H1 (cell line): ENCODE measurements at regions of chr11 and their contacts with region 1.

Region 1: DNA sequence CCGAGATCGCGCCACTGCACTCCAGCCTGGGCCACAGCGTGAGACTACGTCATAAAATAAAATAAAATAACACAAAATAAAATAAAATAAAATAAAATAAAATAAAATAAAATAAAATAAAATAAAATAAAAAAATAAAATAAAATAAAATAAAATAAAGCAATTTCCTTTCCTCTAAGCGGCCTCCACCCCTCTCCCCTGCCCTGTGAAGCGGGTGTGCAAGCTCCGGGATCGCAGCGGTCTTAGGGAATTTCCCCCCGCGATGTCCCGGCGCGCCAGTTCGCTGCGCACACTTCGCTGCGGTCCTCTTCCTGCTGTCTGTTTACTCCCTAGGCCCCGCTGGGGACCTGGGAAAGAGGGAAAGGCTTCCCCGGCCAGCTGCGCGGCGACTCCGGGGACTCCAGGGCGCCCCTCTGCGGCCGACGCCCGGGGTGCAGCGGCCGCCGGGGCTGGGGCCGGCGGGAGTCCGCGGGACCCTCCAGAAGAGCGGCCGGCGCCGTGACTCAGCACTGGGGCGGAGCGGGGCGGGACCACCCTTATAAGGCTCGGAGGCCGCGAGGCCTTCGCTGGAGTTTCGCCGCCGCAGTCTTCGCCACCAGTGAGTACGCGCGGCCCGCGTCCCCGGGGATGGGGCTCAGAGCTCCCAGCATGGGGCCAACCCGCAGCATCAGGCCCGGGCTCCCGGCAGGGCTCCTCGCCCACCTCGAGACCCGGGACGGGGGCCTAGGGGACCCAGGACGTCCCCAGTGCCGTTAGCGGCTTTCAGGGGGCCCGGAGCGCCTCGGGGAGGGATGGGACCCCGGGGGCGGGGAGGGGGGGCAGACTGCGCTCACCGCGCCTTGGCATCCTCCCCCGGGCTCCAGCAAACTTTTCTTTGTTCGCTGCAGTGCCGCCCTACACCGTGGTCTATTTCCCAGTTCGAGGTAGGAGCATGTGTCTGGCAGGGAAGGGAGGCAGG is at the start of gene GSTP1:
- DNase-seq: peak; percentile 82 to 92
- H3K4me3 ChIP-seq: peak within 1 kb of the TSS; percentile 51 to 87 (median 77)
- H3K27ac ChIP-seq: peak within 1 kb of the TSS; percentile 75
- H3K4me1 ChIP-seq: peaks cover 5 to 33% (median 17%) of the 10 kb centered on the region in 4 experiments
- H3K27me3 ChIP-seq: 0 out of 7 replicates have a peak, but pooled peaks cover 0 to 2% (median 0%) of the 10 kb centered on the region in 4 experiments
- CTCF ChIP-seq: peak; percentile 52 to 87 (median 64)
- EP300 ChIP-seq: peak in 1 of 2 experiments; percentile 81; a peak in 1 of 3 replicates
- POLR2A ChIP-seq: peak; percentile 97 to 98
- RAD21 ChIP-seq: peak; percentile 30 to 64; a peak in 3 of 4 replicates
- total RNA-seq, gene GSTP1: 1,454 and 1,516 TPM in 2 replicates

Region 2: GRCh38 chr11:67545280-67545679 is 38.2 kb before region 1 on chr11:
- CTCF ChIA-PET with region 1: interaction called, 3 read pairs
- POLR2A ChIA-PET with region 1: interaction called, 15 read pairs
- DNase-seq: no peak
- H3K4me3 ChIP-seq: no peak overlapping the region
- H3K27ac ChIP-seq: no peak overlapping the region
- H3K4me1 ChIP-seq: peaks cover 0 to 5% (median 0%) of the 10 kb centered on the region in 4 experiments; a peak in 2 of 7 replicates
- H3K27me3 ChIP-seq: no peaks in the 10 kb centered on the region; a peak in 1 of 7 replicates
- CTCF ChIP-seq: peak in 2 of 3 experiments; percentile 29 to 44; a peak in 2 of 4 replicates
- EP300 ChIP-seq: no peak
- POLR2A ChIP-seq: no peak
- RAD21 ChIP-seq: no peak

Region 3: DNA sequence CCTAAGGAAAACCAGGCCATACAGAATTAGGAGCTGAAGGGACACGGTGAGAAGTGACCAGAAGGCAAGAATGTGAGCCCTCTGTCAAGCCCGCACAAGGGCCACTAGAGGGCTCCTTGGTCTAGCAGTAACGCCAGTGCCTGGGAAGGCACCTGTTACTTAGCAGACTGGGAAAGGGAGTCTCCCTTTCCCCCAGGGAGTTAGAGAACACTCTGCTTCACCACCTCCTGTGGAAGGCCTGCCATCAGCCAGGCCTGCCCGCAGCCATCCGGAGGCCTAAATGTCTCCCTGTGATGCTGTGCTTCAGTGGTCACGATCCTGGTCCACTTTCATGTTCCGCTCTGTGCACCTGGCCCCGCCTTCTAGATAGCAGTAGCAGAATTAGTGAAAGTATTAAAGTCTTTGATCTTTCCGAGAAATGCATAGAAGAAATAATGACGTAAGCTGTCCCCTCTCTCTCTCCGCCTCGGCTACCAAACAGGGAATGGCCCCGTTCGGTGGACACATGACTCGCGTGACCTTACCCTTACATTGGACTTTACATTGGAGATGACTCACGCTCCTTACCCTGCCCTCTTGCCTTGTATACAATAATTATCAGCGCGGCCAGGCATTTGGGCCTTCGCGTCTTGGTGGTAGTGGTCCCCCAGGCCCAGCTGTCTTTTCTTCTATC is 10.6 kb before region 1 on chr11:
- CTCF ChIA-PET with region 1: interaction called, 12 read pairs
- POLR2A ChIA-PET with region 1: interaction called, 35 read pairs
- DNase-seq: no peak
- H3K4me3 ChIP-seq: no peak overlapping the region
- H3K27ac ChIP-seq: no peak overlapping the region
- H3K4me1 ChIP-seq: peaks cover 0 to 3% (median 0%) of the 10 kb centered on the region in 4 experiments; a peak in 1 of 7 replicates
- H3K27me3 ChIP-seq: no peaks in the 10 kb centered on the region; a peak in 1 of 7 replicates
- CTCF ChIP-seq: peak; percentile 72 to 76 (median 73)
- EP300 ChIP-seq: no peak
- POLR2A ChIP-seq: no peak
- RAD21 ChIP-seq: peak; percentile 75 to 78

Region 4: GRCh38 chr11:67600324-67601029 is 17.0 kb after region 1 on chr11:
- CTCF ChIA-PET with region 1: interaction called, 4 read pairs
- POLR2A ChIA-PET with region 1: interaction called, 71 read pairs
- DNase-seq: no peak
- H3K4me3 ChIP-seq: no peak overlapping the region
- H3K27ac ChIP-seq: no peak overlapping the region
- H3K4me1 ChIP-seq: peaks cover 5 to 13% (median 10%) of the 10 kb centered on the region in 4 experiments; a peak in 6 of 7 replicates
- H3K27me3 ChIP-seq: peaks cover 0 to under 1% (median 0%) of the 10 kb centered on the region in 4 experiments; a peak in 2 of 7 replicates
- CTCF ChIP-seq: no peak
- EP300 ChIP-seq: no peak
- POLR2A ChIP-seq: no peak
- RAD21 ChIP-seq: no peak

Region 5: GRCh38 chr11:67606492-67607201 is 23.1 kb after region 1 on chr11 and contains the start of gene NDUFV1:
- CTCF ChIA-PET with region 1: interaction called, 97 read pairs
- POLR2A ChIA-PET with region 1: interaction called, 64 read pairs
- DNase-seq: peak in 1 of 2 experiments; percentile 95
- H3K4me3 ChIP-seq: peak within 1 kb of the TSS; percentile 48 to 94 (median 76)
- H3K27ac ChIP-seq: no peak within 1 kb of the TSS
- H3K4me1 ChIP-seq: peaks cover 5 to 27% (median 17%) of the 10 kb centered on the region in 4 experiments; a peak in 6 of 7 replicates
- H3K27me3 ChIP-seq: peaks cover 0 to 4% (median 0%) of the 10 kb centered on the region in 4 experiments; a peak in 2 of 7 replicates
- CTCF ChIP-seq: peak in 2 of 3 experiments; percentile 45 to 62; a peak in 3 of 4 replicates
- EP300 ChIP-seq: no peak
- POLR2A ChIP-seq: peak in 1 of 2 experiments; percentile 39; a peak in 2 of 3 replicates
- RAD21 ChIP-seq: peak in 1 of 2 experiments; percentile 13; a peak in 2 of 4 replicates
- total RNA-seq, gene NDUFV1: 131 TPM in 2 replicates

Region 6: GRCh38 chr11:67613960-67614715 is 30.6 kb after region 1 on chr11:
- CTCF ChIA-PET with region 1: interaction called, 97 read pairs
- POLR2A ChIA-PET with region 1: interaction called, 60 read pairs
- DNase-seq: peak in 1 of 2 experiments; percentile 93
- H3K4me3 ChIP-seq: peak overlapping the region in 1 of 4 experiments; percentile 18; a peak in 1 of 8 replicates
- H3K27ac ChIP-seq: no peak overlapping the region
- H3K4me1 ChIP-seq: peaks cover 13 to 36% (median 31%) of the 10 kb centered on the region in 4 experiments
- H3K27me3 ChIP-seq: peaks cover 0 to 10% (median 5%) of the 10 kb centered on the region in 4 experiments; a peak in 6 of 7 replicates
- CTCF ChIP-seq: peak in 2 of 3 experiments; percentile 77 to 79; a peak in 3 of 4 replicates
- EP300 ChIP-seq: no peak
- POLR2A ChIP-seq: no peak
- RAD21 ChIP-seq: peak; percentile 24 to 45

Region 7: DNA sequence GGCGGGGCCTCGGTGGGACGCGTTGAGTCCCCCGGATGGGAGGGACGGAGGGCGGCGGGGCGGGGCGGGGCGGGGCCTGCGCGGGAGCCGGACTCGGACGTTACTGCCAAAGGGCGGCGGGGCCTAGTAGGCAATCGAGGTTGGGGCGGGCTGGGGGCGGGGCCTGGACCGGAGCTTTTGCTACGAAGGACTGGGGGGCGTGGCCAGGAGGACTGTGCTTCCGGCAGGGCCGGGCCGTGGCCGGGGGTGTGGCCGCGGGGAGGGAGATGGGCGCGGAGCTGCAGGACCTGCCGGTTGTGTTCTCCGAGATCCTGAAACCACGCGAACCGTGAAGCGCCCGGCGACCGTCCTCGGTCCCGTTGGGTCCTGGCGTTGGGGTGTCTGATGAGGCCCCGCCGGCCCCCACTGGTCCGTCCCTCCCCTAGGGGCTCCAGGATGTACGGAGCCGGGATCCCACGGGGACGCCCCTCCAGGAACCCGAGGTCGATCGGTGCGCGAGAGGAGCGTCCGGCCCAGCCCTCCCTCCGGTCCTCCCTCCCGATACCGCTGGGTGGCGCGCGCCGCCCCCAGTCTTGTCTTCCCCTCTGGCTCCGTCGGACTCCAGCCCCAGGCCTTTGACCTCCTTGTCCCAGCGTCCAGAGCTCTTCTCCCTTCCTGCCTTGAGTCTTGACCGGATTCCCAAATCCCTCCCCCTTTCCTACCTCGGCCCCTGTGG is 46.9 kb after region 1 on chr11:
- CTCF ChIA-PET with region 1: interaction called, 19 read pairs
- POLR2A ChIA-PET with region 1: interaction called, 28 read pairs
- DNase-seq: peak; percentile 95 to 98
- H3K4me3 ChIP-seq: peak overlapping the region; percentile 51 to 84 (median 78)
- H3K27ac ChIP-seq: peak overlapping the region; percentile 35; the same call in 1 of the 2 replicates
- H3K4me1 ChIP-seq: peaks cover 0 to 29% (median 18%) of the 10 kb centered on the region in 4 experiments; a peak in 6 of 7 replicates
- H3K27me3 ChIP-seq: no peaks in the 10 kb centered on the region; a peak in 1 of 7 replicates
- CTCF ChIP-seq: peak in 2 of 3 experiments; percentile 74 to 79; a peak in 3 of 4 replicates
- EP300 ChIP-seq: no peak
- POLR2A ChIP-seq: peak in 1 of 2 experiments; percentile 91; a peak in 2 of 3 replicates
- RAD21 ChIP-seq: peak; percentile 60 to 70